ENCODE measurements at regions of chr11 and their contacts with region 1.

Region 1: GRCh38 chr11:112280268-112281126 is 19.8 kb upstream of the PLET1 start:
- DNase-seq: peak; percentile 65 to 93
- H3K4me3 ChIP-seq: peak overlapping the region; percentile 39 to 54 (median 50)
- H3K27ac ChIP-seq: peak overlapping the region in 3 of 5 donors; percentile 44 to 61 (median 53)
- H3K4me1 ChIP-seq: peaks cover 5 to 9% (median 8%) of the 10 kb centered on the region in 4 donors
- H3K27me3 ChIP-seq: no peaks in the 10 kb centered on the region
- CTCF ChIP-seq: peak in 5 of 7 experiments; percentile 52 to 90 (median 62)
- EP300 ChIP-seq: no peak
- POLR2A ChIP-seq: no peak

Region 2: DNA sequence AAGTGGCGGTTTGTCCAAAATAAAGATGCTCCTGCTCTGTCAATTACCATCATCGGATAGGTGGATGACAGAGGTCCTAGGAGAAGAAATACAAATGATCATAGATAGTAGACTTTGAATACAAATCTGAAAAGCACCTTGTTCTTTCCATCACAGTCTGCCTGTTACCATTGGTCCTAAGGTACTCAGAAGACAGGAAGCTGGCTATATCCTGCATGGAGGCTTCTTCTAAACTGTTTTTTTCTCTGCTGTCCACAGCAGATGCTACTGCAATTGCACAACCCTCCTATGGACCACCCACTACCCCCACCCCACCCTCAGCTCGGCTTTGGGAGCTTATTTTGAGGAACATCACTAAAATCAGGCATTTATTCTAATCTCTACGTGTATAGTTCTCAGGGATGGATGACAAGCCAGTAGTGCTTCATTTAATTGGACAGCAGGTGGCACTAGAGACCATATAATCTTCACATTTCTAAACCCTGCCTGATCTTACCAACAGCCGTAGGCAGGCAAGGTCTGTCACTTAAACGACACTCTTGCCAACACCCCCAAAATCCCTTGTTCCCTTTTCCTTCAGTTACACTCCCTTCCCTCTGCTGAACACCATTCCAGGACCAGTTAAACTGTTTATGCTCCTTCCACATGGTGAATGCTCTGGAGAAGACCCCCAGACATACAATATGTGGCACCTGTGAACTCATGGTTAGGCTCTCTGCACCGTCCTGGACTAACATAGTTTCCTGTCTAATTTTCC is 60.8 kb before region 1 on chr11:
- intact Hi-C with region 1: loop called (anchors 5 kb)
- DNase-seq: peak in 1 of 2 donors; percentile 93
- H3K4me3 ChIP-seq: no peak overlapping the region
- H3K27ac ChIP-seq: no peak overlapping the region
- H3K4me1 ChIP-seq: peaks cover 0 to 28% (median 20%) of the 10 kb centered on the region in 4 donors
- H3K27me3 ChIP-seq: no peaks in the 10 kb centered on the region
- CTCF ChIP-seq: peak in 5 of 7 experiments; percentile 55 to 89 (median 66)
- EP300 ChIP-seq: no peak
- POLR2A ChIP-seq: no peak

Region 3: GRCh38 chr11:112481893-112482292 is 201.4 kb after region 1 on chr11:
- intact Hi-C with region 1: no loop called
- DNase-seq: peak in 1 of 2 donors; percentile 58
- H3K4me3 ChIP-seq: no peak overlapping the region
- H3K27ac ChIP-seq: no peak overlapping the region
- H3K4me1 ChIP-seq: no peaks in the 10 kb centered on the region
- H3K27me3 ChIP-seq: no peaks in the 10 kb centered on the region
- CTCF ChIP-seq: no peak
- EP300 ChIP-seq: no peak
- POLR2A ChIP-seq: no peak

Region 4: DNA sequence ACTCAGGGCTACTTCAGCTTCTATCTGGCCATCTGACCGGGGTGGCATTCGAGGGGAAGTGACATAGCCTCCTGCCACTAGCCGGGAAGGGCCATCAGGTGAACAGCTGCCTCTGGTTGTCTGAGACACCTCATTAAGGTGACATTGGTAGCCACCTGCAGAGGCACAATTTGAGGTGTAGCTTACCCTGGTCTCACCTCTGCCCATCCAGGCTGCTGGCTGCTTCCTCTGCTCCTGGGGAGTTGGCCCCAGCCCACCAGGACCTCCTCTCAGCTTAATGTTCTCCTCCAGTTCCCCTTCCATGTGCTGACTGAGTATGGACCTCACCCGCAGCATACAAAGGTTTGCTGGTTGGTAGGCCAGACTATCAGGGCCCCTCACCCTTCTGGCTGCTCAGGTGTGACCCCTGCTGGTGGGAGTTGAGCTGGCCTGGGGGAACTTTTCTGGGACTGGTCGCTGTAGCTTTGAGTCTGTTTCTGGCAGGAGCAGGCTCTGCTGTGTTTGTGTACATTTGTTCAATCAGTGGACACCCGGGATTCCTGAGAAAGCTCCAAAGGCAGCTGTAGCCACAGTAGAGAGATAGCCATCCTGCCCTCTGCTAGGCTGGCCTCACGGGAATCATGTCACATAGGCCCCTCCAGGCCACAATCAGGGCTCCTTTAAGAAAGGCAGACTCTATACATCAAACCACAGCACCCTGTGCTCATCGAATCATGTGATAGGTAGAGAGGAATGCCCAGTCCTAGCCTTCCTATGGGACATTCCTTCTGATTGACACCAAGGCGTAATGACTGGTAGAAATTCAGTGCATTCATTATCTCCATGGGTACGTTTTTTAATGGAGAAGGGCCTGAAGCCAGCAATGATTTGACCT is 275.2 kb after region 1 on chr11:
- intact Hi-C with region 1: loop called (anchors 10 kb)
- DNase-seq: peak; percentile 77 to 82
- H3K4me3 ChIP-seq: no peak overlapping the region
- H3K27ac ChIP-seq: no peak overlapping the region
- H3K4me1 ChIP-seq: peaks cover 0 to 8% (median 5%) of the 10 kb centered on the region in 4 donors
- H3K27me3 ChIP-seq: no peaks in the 10 kb centered on the region
- CTCF ChIP-seq: peak in 6 of 7 experiments; percentile 12 to 73 (median 65)
- EP300 ChIP-seq: no peak
- POLR2A ChIP-seq: no peak

Region 5: DNA sequence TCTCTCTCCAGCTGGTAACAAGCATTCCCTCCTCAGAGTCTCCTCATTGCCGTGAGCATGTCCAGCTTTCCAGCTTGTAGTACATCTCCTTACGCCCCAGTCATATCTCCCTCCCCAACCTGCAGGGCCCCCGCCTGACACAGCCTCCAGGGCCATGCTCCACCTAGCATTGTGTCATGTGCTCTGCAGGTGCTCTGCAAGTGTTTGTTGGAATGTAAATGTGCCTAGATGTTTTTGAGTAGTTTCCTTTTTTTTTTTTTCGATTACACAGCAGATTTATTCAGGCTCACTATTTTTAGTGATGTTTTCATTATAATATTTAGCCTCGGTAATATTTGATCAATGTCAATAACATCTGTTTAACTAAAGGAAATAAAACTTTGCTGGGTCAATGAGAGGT is 763.2 kb after region 1 on chr11:
- intact Hi-C with region 1: no loop called
- DNase-seq: peak; percentile 8 to 31
- H3K4me3 ChIP-seq: no peak overlapping the region
- H3K27ac ChIP-seq: no peak overlapping the region
- H3K4me1 ChIP-seq: no peaks in the 10 kb centered on the region
- H3K27me3 ChIP-seq: no peaks in the 10 kb centered on the region
- CTCF ChIP-seq: no peak
- EP300 ChIP-seq: no peak
- POLR2A ChIP-seq: no peak

Region 6: GRCh38 chr11:113289431-113290187 is 1009.1 kb after region 1 on chr11:
- intact Hi-C with region 1: loop called (anchors 10 kb)
- DNase-seq: peak; percentile 67 to 85
- H3K4me3 ChIP-seq: no peak overlapping the region
- H3K27ac ChIP-seq: no peak overlapping the region
- H3K4me1 ChIP-seq: peaks cover 0 to 17% (median 3%) of the 10 kb centered on the region in 4 donors
- H3K27me3 ChIP-seq: peaks cover 0 to 11% (median 4%) of the 10 kb centered on the region in 3 donors
- CTCF ChIP-seq: peak in 5 of 7 experiments; percentile 75 to 88 (median 82)
- EP300 ChIP-seq: no peak
- POLR2A ChIP-seq: no peak

Measured in stomach (tissue), 19 donors.